ENCODE measurements at regions of chr6 and their contacts with region 1.

Region 1: GRCh38 chr6:24855395-24856245 is 56.9 kb upstream of the ARMH2 start:
- DNase-seq: peak; percentile 81
- H3K27ac ChIP-seq: no peak overlapping the region
- CTCF ChIP-seq: peak; percentile 86

Region 2: GRCh38 chr6:24991810-24992467 is 136.3 kb after region 1 on chr6:
- CTCF ChIA-PET with region 1: interaction called, 14 read pairs
- POLR2A ChIA-PET with region 1: no interaction called
- DNase-seq: peak; percentile 38
- H3K27ac ChIP-seq: no peak overlapping the region
- CTCF ChIP-seq: peak; percentile 39; the same call in 1 of the 2 replicates

Region 3: GRCh38 chr6:25006565-25007001 is 151.0 kb after region 1 on chr6:
- CTCF ChIA-PET with region 1: no interaction called
- POLR2A ChIA-PET with region 1: no interaction called
- DNase-seq: peak; percentile 49
- H3K27ac ChIP-seq: peak overlapping the region; percentile 95
- CTCF ChIP-seq: no peak

Region 4: GRCh38 chr6:25017932-25018567 is 162.4 kb after region 1 on chr6:
- CTCF ChIA-PET with region 1: interaction called, 13 read pairs
- POLR2A ChIA-PET with region 1: no interaction called
- DNase-seq: peak; percentile 69
- H3K27ac ChIP-seq: peak overlapping the region; percentile 71
- CTCF ChIP-seq: peak; percentile 55